BJ (cell line): ENCODE measurements at regions of chr2 and their contacts with region 1.

Region 1: GRCh38 chr2:237165405-237166276 is 80.0 kb downstream of the COPS8 start:
- DNase-seq: no peak
- H3K4me3 ChIP-seq: no peak overlapping the region
- H3K27me3 ChIP-seq: no peaks in the 10 kb centered on the region
- CTCF ChIP-seq: peak; percentile 72

Region 2: DNA sequence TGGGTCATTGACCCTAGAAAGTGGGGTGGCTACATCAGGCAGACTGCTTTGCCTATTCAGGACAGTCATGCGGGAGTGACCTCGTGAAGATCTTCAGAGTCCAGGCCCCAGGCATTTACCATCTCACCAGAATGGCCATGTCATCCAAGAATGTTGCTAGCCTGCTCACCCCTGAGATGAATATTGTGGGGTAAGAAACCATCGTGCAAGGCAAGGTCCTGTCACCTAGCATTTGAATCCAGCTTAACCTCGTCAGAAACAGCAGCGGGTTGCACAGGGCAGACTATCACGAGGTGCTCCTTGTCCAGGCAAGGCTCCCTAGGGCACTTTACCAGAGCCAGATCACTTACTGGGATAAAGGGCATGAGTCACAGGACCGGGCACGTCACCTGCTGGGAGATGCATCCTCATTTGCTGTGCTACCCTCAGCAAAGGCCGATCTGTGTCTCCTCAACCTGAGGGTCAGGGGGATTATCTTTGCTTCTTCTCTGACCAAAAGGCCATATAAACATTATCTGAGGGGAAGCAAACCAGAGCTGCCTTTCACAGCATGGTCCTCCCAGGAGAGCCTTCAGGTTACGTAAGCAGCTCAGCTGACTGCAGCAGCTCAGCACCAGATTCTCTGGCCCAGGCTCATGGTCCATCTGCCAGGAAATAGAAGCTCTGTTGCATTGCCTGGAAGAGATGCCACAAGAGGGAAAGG is 433.6 kb before region 1 on chr2:
- CTCF ChIA-PET with region 1: no interaction called
- POLR2A ChIA-PET with region 1: no interaction called
- DNase-seq: no peak
- H3K4me3 ChIP-seq: no peak overlapping the region
- H3K27me3 ChIP-seq: peaks cover 16% of the 10 kb centered on the region
- CTCF ChIP-seq: no peak

Region 3: DNA sequence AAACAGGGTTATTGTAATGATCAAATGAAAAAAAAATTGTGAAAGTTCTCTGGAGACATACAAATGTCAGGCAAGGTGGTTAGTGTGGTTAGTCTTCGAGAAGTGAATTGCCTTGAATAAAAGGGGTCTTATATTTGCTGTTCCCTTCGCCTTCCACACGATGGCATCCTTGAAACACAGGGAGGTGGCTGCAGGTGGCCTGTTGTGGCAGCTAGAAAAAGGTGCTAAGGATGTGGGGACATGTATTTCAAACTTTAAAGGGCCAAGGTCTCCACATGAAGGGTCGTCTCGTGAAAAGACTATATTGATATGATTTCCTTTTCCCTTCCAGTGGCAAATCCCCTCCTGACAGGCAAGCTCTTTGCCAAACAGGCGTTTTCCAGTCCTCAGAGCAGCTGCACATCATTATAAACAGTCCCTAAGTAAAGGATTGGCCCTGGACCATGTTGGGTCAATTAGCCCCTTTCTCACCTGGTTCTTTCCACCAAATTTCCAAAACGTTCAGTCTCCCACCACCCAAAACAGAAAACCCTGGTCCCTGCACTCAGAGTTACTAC is 11.5 kb before region 1 on chr2:
- CTCF ChIA-PET with region 1: interaction called, 13 read pairs
- POLR2A ChIA-PET with region 1: no interaction called
- DNase-seq: no peak
- H3K4me3 ChIP-seq: no peak overlapping the region
- H3K27me3 ChIP-seq: no peaks in the 10 kb centered on the region
- CTCF ChIP-seq: peak; percentile 79

Region 4: DNA sequence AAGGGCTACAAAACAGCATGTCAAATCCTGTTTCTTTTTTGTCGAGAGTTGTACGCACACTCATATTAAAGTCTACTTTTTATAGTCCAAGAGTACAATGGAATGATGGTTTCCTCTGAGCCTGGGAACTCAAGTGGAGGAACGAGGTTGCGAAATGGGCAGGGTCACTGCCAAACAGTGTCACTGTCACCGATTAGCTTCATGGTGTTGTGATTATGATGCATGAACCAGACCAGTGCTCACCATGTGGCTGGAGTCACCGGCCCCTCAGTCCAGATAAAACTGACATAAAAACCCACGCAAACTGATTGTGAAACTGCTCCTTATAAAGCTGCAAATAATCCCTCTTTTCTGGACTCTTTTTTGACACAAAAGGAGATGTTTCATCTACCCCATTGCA is 42.0 kb after region 1 on chr2:
- CTCF ChIA-PET with region 1: interaction called, 11 read pairs
- POLR2A ChIA-PET with region 1: no interaction called
- DNase-seq: peak; percentile 87
- H3K4me3 ChIP-seq: no peak overlapping the region
- H3K27me3 ChIP-seq: no peaks in the 10 kb centered on the region
- CTCF ChIP-seq: no peak

Region 5: DNA sequence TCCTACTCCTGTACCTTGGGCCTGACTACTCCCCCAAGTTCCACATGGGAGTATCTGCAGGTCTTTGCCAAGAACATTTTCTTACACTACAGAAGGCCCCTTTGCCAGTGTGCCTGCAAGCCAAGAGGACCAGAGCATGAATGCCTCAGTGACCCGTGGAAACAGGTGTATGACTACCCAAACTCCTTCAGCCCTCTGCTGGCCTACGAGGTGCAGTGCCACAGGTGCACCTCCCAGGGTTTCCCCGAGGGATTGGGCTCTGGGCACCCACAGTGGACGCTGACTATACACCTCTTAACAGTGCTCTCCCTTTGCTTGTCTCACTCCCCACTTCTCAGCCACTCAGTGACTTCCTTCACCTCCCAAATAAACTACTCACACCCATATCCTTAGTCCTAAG is 156.9 kb after region 1 on chr2:
- CTCF ChIA-PET with region 1: no interaction called
- POLR2A ChIA-PET with region 1: no interaction called
- DNase-seq: no peak
- H3K4me3 ChIP-seq: no peak overlapping the region
- H3K27me3 ChIP-seq: no peaks in the 10 kb centered on the region
- CTCF ChIP-seq: peak; percentile 41; the same call in 1 of the 2 replicates

Region 6: GRCh38 chr2:237406371-237406895 is 240.8 kb after region 1 on chr2:
- CTCF ChIA-PET with region 1: interaction called, 44 read pairs
- POLR2A ChIA-PET with region 1: interaction called, 23 read pairs
- DNase-seq: no peak
- H3K4me3 ChIP-seq: no peak overlapping the region
- H3K27me3 ChIP-seq: no peaks in the 10 kb centered on the region
- CTCF ChIP-seq: no peak

Region 7: DNA sequence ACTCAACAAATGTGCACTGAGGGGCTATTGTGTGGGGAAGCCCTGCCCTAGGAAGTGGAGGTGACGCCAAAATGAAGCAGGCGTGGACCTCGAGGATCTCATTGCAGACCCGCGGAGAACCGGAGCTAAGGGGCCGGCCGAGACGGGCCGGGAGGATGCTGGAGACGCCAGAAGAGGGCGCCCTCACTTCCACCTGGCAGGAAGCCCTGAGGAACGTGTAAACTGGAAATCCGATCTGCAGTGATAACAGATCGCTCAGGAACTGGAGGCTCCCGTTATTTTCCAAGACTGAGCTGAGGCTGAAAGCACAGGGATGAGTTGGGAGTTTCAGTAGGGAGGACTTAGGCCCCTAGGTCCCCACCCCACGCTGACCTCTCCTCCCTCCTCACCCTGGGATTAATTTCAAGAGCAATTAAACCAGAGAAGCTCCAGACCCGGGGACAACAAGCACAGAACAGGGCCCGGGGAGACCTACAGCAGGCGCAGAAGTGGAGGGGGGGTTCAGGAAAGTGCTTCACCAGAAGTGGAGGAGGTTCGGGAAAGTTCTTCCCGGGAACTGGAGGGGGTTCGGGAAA is 256.0 kb after region 1 on chr2:
- CTCF ChIA-PET with region 1: interaction called, 10 read pairs
- POLR2A ChIA-PET with region 1: no interaction called
- DNase-seq: no peak
- H3K4me3 ChIP-seq: no peak overlapping the region
- H3K27me3 ChIP-seq: no peaks in the 10 kb centered on the region
- CTCF ChIP-seq: peak; percentile 95